K562 (cell line): ENCODE measurements at regions of chr16 and their contacts with region 1.

Region 1: GRCh38 chr16:30395155-30395991 is at the start of gene ZNF48:
- DNase-seq: peak; percentile 82 to 92 (median 89)
- ATAC-seq: peak; percentile 95
- H3K4me3 ChIP-seq: peak within 1 kb of the TSS; percentile 87
- H3K27ac ChIP-seq: peak within 1 kb of the TSS; percentile 86
- H3K4me1 ChIP-seq: peaks cover 26 to 53% of the 10 kb centered on the region in 2 experiments
- H3K27me3 ChIP-seq: no peaks in the 10 kb centered on the region
- CTCF ChIP-seq: peak; percentile 12 to 55 (median 38); a peak in 3 of 6 replicates
- EP300 ChIP-seq: no peak
- POLR2A ChIP-seq: peak; percentile 68
- RAD21 ChIP-seq: peak in 1 of 2 experiments; percentile 20; a peak in 1 of 4 replicates
- polyA plus RNA-seq, gene ZNF48: 0.38 to 0.46 TPM

Region 2: GRCh38 chr16:30104494-30104968 is 290.8 kb before region 1 on chr16:
- CTCF ChIA-PET with region 1: no interaction called
- POLR2A ChIA-PET with region 1: no interaction called
- in situ Hi-C with region 1: no loop called
- intact Hi-C with region 1: no loop called
- DNase-seq: no peak
- ATAC-seq: no peak
- H3K4me3 ChIP-seq: no peak overlapping the region
- H3K27ac ChIP-seq: no peak overlapping the region
- H3K4me1 ChIP-seq: peaks cover 4 to 8% of the 10 kb centered on the region in 2 experiments; a peak in 4 of 5 replicates
- H3K27me3 ChIP-seq: no peaks in the 10 kb centered on the region
- CTCF ChIP-seq: no peak
- EP300 ChIP-seq: no peak
- POLR2A ChIP-seq: no peak
- RAD21 ChIP-seq: no peak

Region 3: GRCh38 chr16:30381291-30382041 is 13.9 kb before region 1 on chr16:
- CTCF ChIA-PET with region 1: no interaction called
- POLR2A ChIA-PET with region 1: interaction called, 5 read pairs
- in situ Hi-C with region 1: no loop called
- intact Hi-C with region 1: loop called (anchors 2 kb)
- DNase-seq: peak; percentile 79 to 96 (median 83)
- ATAC-seq: peak; percentile 63
- H3K4me3 ChIP-seq: no peak overlapping the region
- H3K27ac ChIP-seq: peak overlapping the region; percentile 91
- H3K4me1 ChIP-seq: peaks cover 42 to 58% of the 10 kb centered on the region in 2 experiments
- H3K27me3 ChIP-seq: no peaks in the 10 kb centered on the region
- CTCF ChIP-seq: peak in 2 of 3 experiments; percentile 11 to 16; a peak in 1 of 6 replicates
- EP300 ChIP-seq: peak; percentile 57; the same call in 1 of the 2 replicates
- POLR2A ChIP-seq: peak; percentile 77
- RAD21 ChIP-seq: peak in 1 of 2 experiments; percentile 33; a peak in 2 of 4 replicates